Endothelial cell of umbilical vein (primary cell): ENCODE measurements at regions of chr14 and their contacts with region 1.

Region 1: GRCh38 chr14:50860478-50861086 is 11.3 kb upstream of the ABHD12B start:
- DNase-seq: peak; percentile 92
- H3K4me3 ChIP-seq: peak overlapping the region; percentile 49 to 72 (median 65)
- H3K27ac ChIP-seq: peak overlapping the region; percentile 78
- H3K4me1 ChIP-seq: peaks cover 10% of the 10 kb centered on the region
- H3K27me3 ChIP-seq: peaks cover 0 to 2% of the 10 kb centered on the region in 2 experiments
- CTCF ChIP-seq: peak; percentile 54 to 57
- POLR2A ChIP-seq: no peak

Region 2: GRCh38 chr14:50542941-50543418 is 317.6 kb before region 1 on chr14:
- CTCF ChIA-PET with region 1: interaction called, 15 read pairs
- POLR2A ChIA-PET with region 1: no interaction called
- dilution Hi-C with region 1: no loop called
- intact Hi-C with region 1: loop called (anchors 1 kb)
- DNase-seq: peak; percentile 68
- H3K4me3 ChIP-seq: no peak overlapping the region
- H3K27ac ChIP-seq: no peak overlapping the region
- H3K4me1 ChIP-seq: no peaks in the 10 kb centered on the region
- H3K27me3 ChIP-seq: peaks cover 0 to 11% of the 10 kb centered on the region in 2 experiments
- CTCF ChIP-seq: peak; percentile 24 to 47
- POLR2A ChIP-seq: no peak

Region 3: GRCh38 chr14:50714450-50715073 is 146.0 kb before region 1 on chr14:
- CTCF ChIA-PET with region 1: interaction called, 18 read pairs
- POLR2A ChIA-PET with region 1: no interaction called
- dilution Hi-C with region 1: no loop called
- intact Hi-C with region 1: no loop called
- DNase-seq: peak; percentile 60
- H3K4me3 ChIP-seq: no peak overlapping the region
- H3K27ac ChIP-seq: no peak overlapping the region
- H3K4me1 ChIP-seq: no peaks in the 10 kb centered on the region
- H3K27me3 ChIP-seq: no peaks in the 10 kb centered on the region
- CTCF ChIP-seq: peak; percentile 38 to 63
- POLR2A ChIP-seq: no peak

Region 4: GRCh38 chr14:50773632-50774541 is 86.7 kb before region 1 on chr14:
- CTCF ChIA-PET with region 1: interaction called, 140 read pairs
- POLR2A ChIA-PET with region 1: interaction called, 3 read pairs
- dilution Hi-C with region 1: no loop called
- intact Hi-C with region 1: loop called (anchors 1 kb)
- DNase-seq: peak; percentile 60
- H3K4me3 ChIP-seq: no peak overlapping the region
- H3K27ac ChIP-seq: peak overlapping the region; percentile 71
- H3K4me1 ChIP-seq: peaks cover 33% of the 10 kb centered on the region
- H3K27me3 ChIP-seq: no peaks in the 10 kb centered on the region
- CTCF ChIP-seq: peak; percentile 83 to 84
- POLR2A ChIP-seq: no peak

Region 5: GRCh38 chr14:50804181-50804721 is 56.3 kb before region 1 on chr14:
- CTCF ChIA-PET with region 1: interaction called, 23 read pairs
- POLR2A ChIA-PET with region 1: no interaction called
- dilution Hi-C with region 1: no loop called
- intact Hi-C with region 1: loop called (anchors 1 kb)
- DNase-seq: peak; percentile 78
- H3K4me3 ChIP-seq: no peak overlapping the region
- H3K27ac ChIP-seq: peak overlapping the region; percentile 78
- H3K4me1 ChIP-seq: peaks cover 54% of the 10 kb centered on the region
- H3K27me3 ChIP-seq: no peaks in the 10 kb centered on the region
- CTCF ChIP-seq: no peak
- POLR2A ChIP-seq: no peak

Region 6: GRCh38 chr14:50846226-50846880 is 14.2 kb before region 1 on chr14:
- CTCF ChIA-PET with region 1: interaction called, 30 read pairs
- POLR2A ChIA-PET with region 1: no interaction called
- dilution Hi-C with region 1: no loop called
- intact Hi-C with region 1: no loop called
- DNase-seq: no peak
- H3K4me3 ChIP-seq: no peak overlapping the region
- H3K27ac ChIP-seq: no peak overlapping the region
- H3K4me1 ChIP-seq: no peaks in the 10 kb centered on the region
- H3K27me3 ChIP-seq: peaks cover 3 to 12% of the 10 kb centered on the region in 2 experiments
- CTCF ChIP-seq: no peak
- POLR2A ChIP-seq: no peak

Region 7: DNA sequence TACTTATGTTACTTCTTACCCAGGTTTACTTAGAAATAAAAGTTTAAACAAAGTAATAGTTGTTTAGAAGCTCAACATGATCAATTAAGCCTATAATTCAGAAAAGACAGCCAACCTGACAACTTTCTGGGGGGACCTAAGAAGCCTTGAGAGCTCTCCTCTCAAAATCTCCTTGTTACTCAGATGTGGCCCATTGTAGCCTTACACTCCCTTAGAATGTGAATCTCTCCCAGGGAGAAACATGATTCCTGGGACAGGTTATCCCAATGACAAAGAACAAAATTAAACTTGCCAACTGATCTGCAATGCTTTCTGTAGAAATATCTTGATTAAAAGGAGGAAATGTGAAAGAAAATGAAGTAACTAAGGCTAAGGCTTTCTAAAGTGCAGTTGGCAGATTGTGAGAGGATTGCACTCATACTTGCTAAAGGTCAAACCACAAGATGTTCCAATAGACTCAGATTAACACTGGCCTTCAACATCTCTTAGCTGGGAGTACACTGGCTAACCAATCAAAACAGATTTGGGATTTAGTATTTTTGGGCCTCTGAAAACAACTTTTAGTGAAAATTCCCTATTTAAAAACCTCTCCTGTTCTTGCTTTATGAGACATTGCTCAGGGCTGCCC is 307.1 kb after region 1 on chr14:
- CTCF ChIA-PET with region 1: no interaction called
- POLR2A ChIA-PET with region 1: no interaction called
- dilution Hi-C with region 1: no loop called
- intact Hi-C with region 1: no loop called
- DNase-seq: no peak
- H3K4me3 ChIP-seq: no peak overlapping the region
- H3K27ac ChIP-seq: no peak overlapping the region
- H3K4me1 ChIP-seq: no peaks in the 10 kb centered on the region
- H3K27me3 ChIP-seq: peaks cover 6 to 12% of the 10 kb centered on the region in 2 experiments
- CTCF ChIP-seq: no peak
- POLR2A ChIP-seq: no peak